ENCODE measurements at regions of chr17 and their contacts with region 1.

Region 1: DNA sequence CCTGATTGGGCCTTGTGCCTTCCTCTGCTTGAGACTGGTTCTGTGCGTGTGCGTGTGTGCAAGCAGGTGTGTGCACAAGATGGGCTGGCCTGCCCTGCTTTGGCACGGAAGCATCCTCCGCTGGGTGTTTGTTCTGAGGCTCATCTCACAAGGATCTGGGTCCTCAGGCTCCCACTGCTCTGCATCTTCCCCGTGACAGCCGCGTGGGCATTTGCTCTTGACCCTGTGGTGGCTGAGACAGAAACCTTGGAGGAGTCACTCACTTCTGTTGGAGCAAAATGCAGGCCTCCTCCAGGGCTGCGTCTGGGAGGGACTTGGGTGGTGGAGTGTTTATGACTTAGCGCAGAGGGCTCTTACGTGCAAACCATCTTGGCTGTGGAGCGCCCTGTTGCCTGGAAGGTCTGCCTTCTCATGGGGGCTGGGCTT is 119.2 kb downstream of the RPTOR start:
- DNase-seq: peak in 8 of 9 donors; percentile 48 to 79 (median 60)
- ATAC-seq: peak; percentile 63
- H3K4me3 ChIP-seq: peak overlapping the region; percentile 40
- H3K4me3 Mint-ChIP-seq: peak overlapping the region; percentile 69 to 95 (median 82)
- H3K27ac ChIP-seq: peak overlapping the region; percentile 94
- H3K27ac Mint-ChIP-seq: peak overlapping the region; percentile 91 to 100 (median 96)
- H3K4me1 ChIP-seq: peaks cover 36 to 58% of the 10 kb centered on the region in 2 donors
- H3K4me1 Mint-ChIP-seq: peaks cover 52 to 88% (median 79%) of the 10 kb centered on the region in 7 donors
- H3K27me3 ChIP-seq: no peaks in the 10 kb centered on the region
- H3K27me3 Mint-ChIP-seq: no peaks in the 10 kb centered on the region

Region 2: DNA sequence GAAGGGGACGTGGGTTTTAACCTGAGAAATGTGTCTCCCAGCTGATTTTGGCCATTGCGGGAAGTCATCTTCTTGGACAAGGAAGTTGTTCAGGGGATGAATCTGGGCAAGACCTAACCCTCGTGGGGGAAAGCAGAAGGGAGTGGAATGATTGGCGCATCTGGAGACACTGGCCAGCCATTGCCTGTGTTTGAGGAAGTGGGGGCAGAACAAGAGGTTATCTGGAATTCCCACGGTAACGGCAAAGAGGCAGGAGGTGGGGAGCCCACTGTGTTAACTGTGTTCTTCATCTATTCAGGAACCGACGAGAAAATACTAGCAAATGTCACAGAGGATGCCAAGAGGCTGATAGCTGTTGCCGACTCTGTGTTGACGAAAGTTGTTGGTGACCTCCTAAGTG is 336.3 kb before region 1 on chr17:
- CTCF ChIA-PET with region 1: no interaction called
- POLR2A ChIA-PET with region 1: no interaction called
- intact Hi-C with region 1: no loop called
- DNase-seq: no peak
- ATAC-seq: peak; percentile 32
- H3K4me3 ChIP-seq: no peak overlapping the region
- H3K4me3 Mint-ChIP-seq: no peak overlapping the region
- H3K27ac ChIP-seq: no peak overlapping the region
- H3K27ac Mint-ChIP-seq: peak overlapping the region in 1 of 9 donors; percentile 67
- H3K4me1 ChIP-seq: no peaks in the 10 kb centered on the region
- H3K4me1 Mint-ChIP-seq: peaks cover 0 to 54% (median 12%) of the 10 kb centered on the region in 7 donors
- H3K27me3 ChIP-seq: no peaks in the 10 kb centered on the region
- H3K27me3 Mint-ChIP-seq: no peaks in the 10 kb centered on the region

Region 3: DNA sequence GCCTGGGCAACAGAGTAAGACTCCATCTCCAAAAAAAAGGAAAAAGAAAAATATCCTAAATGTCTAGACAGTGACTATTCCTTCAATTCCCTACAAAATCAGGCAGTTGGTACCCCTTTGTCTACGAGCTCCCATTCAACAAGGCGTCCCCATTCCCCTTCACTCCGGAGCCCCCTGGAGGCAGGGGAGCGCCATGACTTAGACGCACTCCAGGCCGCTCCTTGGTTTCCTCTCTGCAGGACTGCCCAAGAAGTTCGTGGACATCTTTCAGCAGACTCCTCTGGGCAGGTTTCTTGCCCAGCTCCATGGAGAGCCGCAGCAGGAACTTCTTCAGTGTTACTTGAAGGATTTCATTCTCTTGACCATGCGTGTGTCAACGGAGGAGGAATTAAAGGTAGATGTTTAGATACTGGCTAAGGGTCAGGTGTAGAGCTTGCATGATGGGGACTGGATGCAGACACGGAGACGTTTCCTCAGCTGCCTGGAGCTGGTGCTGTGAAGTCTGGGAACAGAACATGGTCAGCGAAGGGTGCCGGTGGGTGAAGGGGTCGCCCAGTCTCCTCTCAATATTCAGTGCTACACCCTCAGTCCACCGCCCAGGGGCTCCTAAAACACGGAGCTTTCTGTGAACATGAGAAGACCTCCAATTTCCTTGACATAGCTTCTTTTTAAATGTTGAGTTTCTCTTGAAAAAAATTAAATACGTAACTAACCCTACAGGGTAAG is 302.1 kb before region 1 on chr17:
- CTCF ChIA-PET with region 1: no interaction called
- POLR2A ChIA-PET with region 1: no interaction called
- intact Hi-C with region 1: no loop called
- DNase-seq: peak in 4 of 9 donors; percentile 10 to 21 (median 18)
- ATAC-seq: no peak
- H3K4me3 ChIP-seq: no peak overlapping the region
- H3K4me3 Mint-ChIP-seq: no peak overlapping the region
- H3K27ac ChIP-seq: no peak overlapping the region
- H3K27ac Mint-ChIP-seq: peak overlapping the region in 2 of 9 donors; percentile 28 to 55
- H3K4me1 ChIP-seq: no peaks in the 10 kb centered on the region
- H3K4me1 Mint-ChIP-seq: no peaks in the 10 kb centered on the region
- H3K27me3 ChIP-seq: no peaks in the 10 kb centered on the region
- H3K27me3 Mint-ChIP-seq: no peaks in the 10 kb centered on the region

Region 4: DNA sequence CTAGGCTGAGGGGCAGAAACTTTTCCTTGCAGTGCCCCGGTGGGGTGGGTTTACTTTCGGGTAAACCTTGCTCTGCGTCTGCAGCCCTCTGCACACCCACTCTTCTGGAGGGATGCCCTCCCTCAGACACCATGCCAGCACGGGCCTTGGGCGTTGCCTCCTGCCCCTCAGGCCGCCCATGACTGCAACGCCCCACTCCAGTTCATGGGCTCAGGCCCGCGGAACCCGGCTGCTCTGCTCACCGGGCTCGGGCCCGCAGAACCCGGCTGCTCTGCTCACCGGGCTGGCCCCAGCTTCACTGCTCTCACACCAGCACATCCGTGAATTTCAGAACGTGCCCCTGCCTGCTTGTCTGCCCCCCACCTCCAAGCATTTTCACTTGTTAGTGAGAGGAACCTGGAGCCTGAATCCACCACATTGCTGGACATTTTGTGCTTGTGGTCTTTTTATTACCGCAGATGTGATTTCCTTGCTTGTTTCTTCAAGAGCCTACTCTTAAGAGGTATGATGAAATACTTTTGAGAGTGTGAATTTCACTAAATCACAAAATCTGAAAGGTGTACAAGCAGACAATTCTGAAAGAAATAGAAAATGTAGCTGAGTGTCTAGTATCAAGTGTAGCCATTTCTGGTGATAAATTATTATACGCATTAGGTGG is 11.8 kb after region 1 on chr17:
- CTCF ChIA-PET with region 1: interaction called, 3 read pairs
- POLR2A ChIA-PET with region 1: interaction called, 8 read pairs
- intact Hi-C with region 1: loop called in 1 of 2 experiments (anchors 2 kb)
- DNase-seq: no peak
- ATAC-seq: no peak
- H3K4me3 ChIP-seq: no peak overlapping the region
- H3K4me3 Mint-ChIP-seq: peak overlapping the region in 2 of 10 donors; percentile 31 to 40
- H3K27ac ChIP-seq: no peak overlapping the region
- H3K27ac Mint-ChIP-seq: peak overlapping the region in 5 of 9 donors; percentile 2 to 93 (median 58)
- H3K4me1 ChIP-seq: peaks cover 4 to 23% of the 10 kb centered on the region in 2 donors
- H3K4me1 Mint-ChIP-seq: peaks cover 51 to 90% (median 82%) of the 10 kb centered on the region in 7 donors
- H3K27me3 ChIP-seq: no peaks in the 10 kb centered on the region
- H3K27me3 Mint-ChIP-seq: no peaks in the 10 kb centered on the region

Region 5: GRCh38 chr17:80732268-80732667 is 68.5 kb after region 1 on chr17:
- CTCF ChIA-PET with region 1: no interaction called
- POLR2A ChIA-PET with region 1: interaction called, 3 read pairs
- intact Hi-C with region 1: loop called in 1 of 2 experiments (anchors 1 kb)
- DNase-seq: no peak
- ATAC-seq: no peak
- H3K4me3 ChIP-seq: no peak overlapping the region
- H3K4me3 Mint-ChIP-seq: peak overlapping the region in 2 of 10 donors; percentile 25
- H3K27ac ChIP-seq: no peak overlapping the region
- H3K27ac Mint-ChIP-seq: peak overlapping the region in 6 of 9 donors; percentile 15 to 96 (median 66)
- H3K4me1 ChIP-seq: peaks cover 7 to 15% of the 10 kb centered on the region in 2 donors
- H3K4me1 Mint-ChIP-seq: peaks cover 11 to 88% (median 73%) of the 10 kb centered on the region in 7 donors
- H3K27me3 ChIP-seq: no peaks in the 10 kb centered on the region
- H3K27me3 Mint-ChIP-seq: no peaks in the 10 kb centered on the region

Region 6: DNA sequence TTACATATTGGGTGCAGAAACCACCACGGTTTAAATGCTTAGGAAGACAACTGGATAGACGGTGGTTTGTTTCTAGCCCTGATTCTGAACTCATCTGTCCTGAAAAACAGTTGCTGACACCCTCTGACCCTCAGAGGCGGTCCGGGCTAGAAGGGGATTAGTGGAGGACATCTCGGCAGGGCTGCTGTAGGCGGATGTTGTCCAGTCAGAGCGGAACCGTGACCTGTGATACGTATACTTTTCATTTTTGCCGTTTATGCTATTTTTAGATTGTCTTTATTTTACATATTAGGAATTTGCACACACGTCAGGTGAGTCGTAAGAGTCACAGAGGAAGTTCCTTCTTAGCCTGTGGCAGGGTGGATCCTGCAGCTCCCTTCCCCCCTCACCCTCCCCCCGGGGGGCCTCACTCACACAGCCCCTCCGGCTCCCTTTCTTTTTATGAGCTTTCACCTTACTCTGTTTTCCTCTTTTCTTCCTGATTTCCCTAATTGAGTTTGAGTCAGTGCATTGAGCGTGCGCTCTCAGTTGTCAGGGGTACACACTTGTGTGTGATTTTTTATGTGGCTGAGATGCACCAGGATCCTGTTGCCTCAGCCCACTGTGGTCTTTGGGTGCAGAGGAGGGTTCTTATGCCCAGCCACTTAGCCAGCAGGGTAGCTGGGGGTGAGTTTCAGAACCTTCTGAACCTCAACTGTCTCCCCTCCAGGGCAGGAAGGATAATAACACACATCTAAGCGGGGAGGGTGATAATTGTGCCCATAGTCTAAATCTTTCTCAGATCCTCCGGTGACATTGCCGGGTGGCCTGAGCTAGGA is 116.8 kb after region 1 on chr17:
- CTCF ChIA-PET with region 1: interaction called, 4 read pairs
- POLR2A ChIA-PET with region 1: interaction called, 4 read pairs
- intact Hi-C with region 1: loop called (anchors 1 to 5 kb)
- DNase-seq: peak in 3 of 9 donors; percentile 29 to 57 (median 43)
- ATAC-seq: peak; percentile 40
- H3K4me3 ChIP-seq: peak overlapping the region; percentile 45
- H3K4me3 Mint-ChIP-seq: peak overlapping the region; percentile 62 to 96 (median 82)
- H3K27ac ChIP-seq: peak overlapping the region; percentile 70
- H3K27ac Mint-ChIP-seq: peak overlapping the region; percentile 87 to 99 (median 94)
- H3K4me1 ChIP-seq: peaks cover 38 to 57% of the 10 kb centered on the region in 2 donors
- H3K4me1 Mint-ChIP-seq: peaks cover 30 to 90% (median 77%) of the 10 kb centered on the region in 7 donors
- H3K27me3 ChIP-seq: no peaks in the 10 kb centered on the region
- H3K27me3 Mint-ChIP-seq: no peaks in the 10 kb centered on the region